CD8-positive, alpha-beta T cell (primary cell): ENCODE measurements at regions of chr20 and their contacts with region 1.

Region 1: DNA sequence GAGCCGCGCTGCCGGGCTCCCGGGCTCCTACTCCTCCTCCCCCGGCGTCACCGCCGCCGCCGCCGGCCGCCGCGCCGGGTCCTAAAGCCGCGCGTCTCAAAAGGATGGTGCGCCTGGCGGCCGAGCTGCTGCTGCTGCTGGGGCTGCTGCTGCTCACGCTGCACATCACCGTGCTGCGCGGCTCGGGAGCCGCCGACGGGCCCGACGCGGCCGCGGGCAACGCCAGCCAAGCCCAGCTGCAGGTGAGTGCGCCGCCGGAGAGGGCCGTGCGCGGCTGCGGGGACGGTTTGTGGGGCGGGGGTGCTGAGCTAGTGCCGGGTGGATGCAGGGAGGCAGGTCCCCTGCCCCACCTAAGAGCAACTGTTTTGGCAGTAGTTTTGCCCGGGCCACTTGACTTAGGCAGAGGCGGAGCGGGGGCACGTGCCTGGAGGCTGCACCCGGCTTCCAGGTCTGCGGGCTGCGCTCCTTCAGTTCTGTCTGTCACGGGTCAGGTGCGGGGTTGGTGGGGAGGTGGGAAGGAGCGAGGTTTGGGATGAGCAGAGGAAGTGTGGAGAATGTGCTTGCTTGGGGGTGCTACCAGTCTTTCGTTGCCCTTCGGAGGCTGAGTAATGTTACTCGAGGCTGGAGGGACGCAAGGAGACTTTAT is 722 bp downstream of the ISM1 start:
- DNase-seq: peak; percentile 34 to 77 (median 63)
- ATAC-seq: peak; percentile 74
- H3K4me3 ChIP-seq: peak overlapping the region; percentile 22 to 57
- H3K4me3 Mint-ChIP-seq: peak overlapping the region; percentile 84
- H3K27ac ChIP-seq: no peak overlapping the region
- H3K27ac Mint-ChIP-seq: peak overlapping the region; percentile 43
- H3K4me1 ChIP-seq: peaks cover 21% of the 10 kb centered on the region
- H3K4me1 Mint-ChIP-seq: peaks cover 17% of the 10 kb centered on the region
- H3K27me3 ChIP-seq: peaks cover 10 to 12% of the 10 kb centered on the region in 2 experiments
- H3K27me3 Mint-ChIP-seq: peaks cover 29% of the 10 kb centered on the region
- CTCF ChIP-seq: no peak

Region 2: GRCh38 chr20:13243826-13244376 is 22.1 kb after region 1 on chr20:
- CTCF ChIA-PET with region 1: interaction called, 4 read pairs
- POLR2A ChIA-PET with region 1: interaction called, 3 read pairs
- intact Hi-C with region 1: loop called (anchors 2 kb)
- DNase-seq: no peak
- ATAC-seq: no peak
- H3K4me3 ChIP-seq: no peak overlapping the region
- H3K4me3 Mint-ChIP-seq: no peak overlapping the region
- H3K27ac ChIP-seq: no peak overlapping the region
- H3K27ac Mint-ChIP-seq: no peak overlapping the region
- H3K4me1 ChIP-seq: peaks cover 28% of the 10 kb centered on the region
- H3K4me1 Mint-ChIP-seq: peaks cover 30% of the 10 kb centered on the region
- H3K27me3 ChIP-seq: no peaks in the 10 kb centered on the region
- H3K27me3 Mint-ChIP-seq: no peaks in the 10 kb centered on the region
- CTCF ChIP-seq: no peak

Region 3: GRCh38 chr20:13251106-13251903 is 29.5 kb after region 1 on chr20:
- CTCF ChIA-PET with region 1: no interaction called
- POLR2A ChIA-PET with region 1: interaction called, 4 read pairs
- intact Hi-C with region 1: loop called (anchors 2 kb)
- DNase-seq: no peak
- ATAC-seq: no peak
- H3K4me3 ChIP-seq: no peak overlapping the region
- H3K4me3 Mint-ChIP-seq: no peak overlapping the region
- H3K27ac ChIP-seq: no peak overlapping the region
- H3K27ac Mint-ChIP-seq: no peak overlapping the region
- H3K4me1 ChIP-seq: peaks cover 39% of the 10 kb centered on the region
- H3K4me1 Mint-ChIP-seq: peaks cover 39% of the 10 kb centered on the region
- H3K27me3 ChIP-seq: no peaks in the 10 kb centered on the region
- H3K27me3 Mint-ChIP-seq: no peaks in the 10 kb centered on the region
- CTCF ChIP-seq: no peak

Region 4: DNA sequence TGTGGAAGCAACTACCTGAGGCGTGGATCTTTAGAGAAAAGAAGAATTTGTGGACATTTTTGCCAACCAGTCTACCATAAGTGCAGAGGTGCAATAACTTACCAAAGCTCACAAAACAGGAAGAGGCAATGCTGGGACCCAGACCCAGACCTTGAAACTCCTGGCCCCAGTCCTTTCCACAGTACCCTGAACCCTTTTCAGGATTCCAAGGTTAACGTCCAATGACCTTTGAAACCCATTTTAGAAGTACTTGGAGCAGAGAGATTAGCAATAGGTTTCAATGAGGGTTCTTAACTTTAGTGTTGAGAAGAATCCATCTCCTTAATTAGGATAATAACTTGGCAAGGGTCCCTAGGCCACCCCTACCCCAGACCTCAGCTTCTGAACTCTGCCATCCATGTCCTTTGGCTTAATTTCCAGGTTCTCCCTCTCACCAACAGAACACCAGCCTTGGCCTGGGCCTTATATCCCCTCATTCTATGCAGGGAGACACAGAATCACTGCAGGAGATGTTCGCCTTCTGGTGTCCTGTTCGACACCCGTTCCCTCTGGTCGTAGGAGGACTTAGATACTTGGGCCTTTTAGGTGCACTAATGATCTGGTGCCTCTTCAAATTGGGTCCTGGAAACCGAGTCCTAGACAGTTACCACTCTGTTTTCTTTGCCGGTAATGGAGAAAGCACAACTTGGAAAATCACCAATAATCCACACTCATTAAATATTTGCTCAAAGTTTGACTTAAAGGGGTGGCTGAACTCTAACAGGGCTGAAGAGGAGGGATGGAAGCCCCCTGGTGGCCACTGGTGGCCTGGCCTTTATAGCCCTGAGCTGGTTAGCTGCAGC is 39.9 kb after region 1 on chr20:
- CTCF ChIA-PET with region 1: interaction called, 5 read pairs
- POLR2A ChIA-PET with region 1: interaction called, 6 read pairs
- intact Hi-C with region 1: loop called (anchors 5 kb)
- DNase-seq: peak; percentile 34 to 75 (median 69)
- ATAC-seq: peak; percentile 84
- H3K4me3 ChIP-seq: no peak overlapping the region
- H3K4me3 Mint-ChIP-seq: no peak overlapping the region
- H3K27ac ChIP-seq: no peak overlapping the region
- H3K27ac Mint-ChIP-seq: no peak overlapping the region
- H3K4me1 ChIP-seq: no peaks in the 10 kb centered on the region
- H3K4me1 Mint-ChIP-seq: peaks cover 4% of the 10 kb centered on the region
- H3K27me3 ChIP-seq: no peaks in the 10 kb centered on the region
- H3K27me3 Mint-ChIP-seq: no peaks in the 10 kb centered on the region
- CTCF ChIP-seq: peak; percentile 80

Region 5: GRCh38 chr20:13638496-13639222 is 416.9 kb after region 1 on chr20 and contains the start of gene TASP1:
- CTCF ChIA-PET with region 1: no interaction called
- POLR2A ChIA-PET with region 1: no interaction called
- intact Hi-C with region 1: loop called in 1 of 2 experiments (anchors 10 kb)
- DNase-seq: peak; percentile 93 to 98 (median 97)
- ATAC-seq: peak; percentile 99
- H3K4me3 ChIP-seq: peak within 1 kb of the TSS; percentile 75 to 85
- H3K4me3 Mint-ChIP-seq: peak within 1 kb of the TSS; percentile 90
- H3K27ac ChIP-seq: peak within 1 kb of the TSS; percentile 74 to 80
- H3K27ac Mint-ChIP-seq: peak within 1 kb of the TSS; percentile 66
- H3K4me1 ChIP-seq: peaks cover 4% of the 10 kb centered on the region
- H3K4me1 Mint-ChIP-seq: peaks cover 24% of the 10 kb centered on the region
- H3K27me3 ChIP-seq: no peaks in the 10 kb centered on the region
- H3K27me3 Mint-ChIP-seq: peaks cover 7% of the 10 kb centered on the region
- CTCF ChIP-seq: no peak
- total RNA-seq, gene TASP1: 10.7 to 11.5 TPM

Region 6: DNA sequence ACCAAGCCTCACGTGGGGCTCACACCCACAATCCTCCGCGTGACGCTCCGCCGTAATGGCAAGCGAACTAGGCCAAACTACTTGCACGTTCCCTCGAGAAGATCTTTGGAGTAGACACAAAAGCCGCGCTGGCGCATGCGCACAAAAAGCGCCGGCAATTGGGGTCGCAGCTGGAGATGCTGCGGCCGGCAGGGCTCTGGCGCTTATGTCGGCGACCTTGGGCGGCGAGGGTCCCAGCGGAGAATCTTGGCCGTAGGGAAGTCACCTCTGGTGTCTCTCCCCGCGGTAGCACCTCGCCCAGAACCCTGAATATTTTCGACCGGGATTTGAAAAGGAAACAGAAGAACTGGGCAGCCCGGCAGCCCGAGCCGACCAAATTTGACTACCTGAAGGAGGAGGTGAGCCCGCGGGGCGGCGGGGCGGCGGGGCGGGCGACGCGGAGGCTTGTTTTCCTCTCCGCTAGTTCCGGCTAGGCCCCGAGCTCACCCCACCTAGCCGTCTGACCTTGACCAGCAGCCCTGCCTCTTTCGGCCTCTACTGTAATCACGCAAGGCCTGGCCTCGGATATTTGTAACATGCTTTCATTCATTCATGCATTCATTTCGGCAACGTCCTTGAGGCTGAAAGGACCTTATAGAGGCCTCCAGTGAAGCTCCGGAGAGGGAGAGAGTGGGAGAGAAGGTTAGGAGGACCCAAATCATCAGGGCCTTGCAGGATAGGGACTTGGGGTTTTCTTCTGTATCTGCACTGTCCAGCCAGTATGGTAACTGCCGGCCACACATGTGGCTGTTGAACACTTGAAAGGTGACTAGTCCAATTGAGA is 563.3 kb after region 1 on chr20 and contains the starts of genes ESF1 and NDUFAF5:
- CTCF ChIA-PET with region 1: no interaction called
- POLR2A ChIA-PET with region 1: no interaction called
- intact Hi-C with region 1: loop called (anchors 10 kb)
- DNase-seq: peak; percentile 82 to 96 (median 91)
- ATAC-seq: peak; percentile 96
- H3K4me3 ChIP-seq: peak within 1 kb of the TSS; percentile 74 to 84
- H3K4me3 Mint-ChIP-seq: peak within 1 kb of the TSS; percentile 98
- H3K27ac ChIP-seq: peak within 1 kb of the TSS; percentile 77 to 87
- H3K27ac Mint-ChIP-seq: peak within 1 kb of the TSS; percentile 98
- H3K4me1 ChIP-seq: peaks cover 23% of the 10 kb centered on the region
- H3K4me1 Mint-ChIP-seq: peaks cover 60% of the 10 kb centered on the region
- H3K27me3 ChIP-seq: no peaks in the 10 kb centered on the region
- H3K27me3 Mint-ChIP-seq: no peaks in the 10 kb centered on the region
- CTCF ChIP-seq: no peak
- total RNA-seq, gene ESF1: 7.9 to 8.8 TPM
- total RNA-seq, gene NDUFAF5: 78.6 to 92.1 TPM